H1 (cell line): ENCODE measurements at regions of chr5 and their contacts with region 1.

Region 1: GRCh38 chr5:112366987-112367386 is 52.1 kb downstream of the EPB41L4A start:
- DNase-seq: no peak
- H3K4me3 ChIP-seq: no peak overlapping the region
- H3K27ac ChIP-seq: no peak overlapping the region
- H3K4me1 ChIP-seq: no peaks in the 10 kb centered on the region
- H3K27me3 ChIP-seq: no peaks in the 10 kb centered on the region
- CTCF ChIP-seq: peak; percentile 25 to 76 (median 54)
- EP300 ChIP-seq: no peak
- POLR2A ChIP-seq: no peak
- RAD21 ChIP-seq: peak; percentile 43 to 63; a peak in 3 of 4 replicates

Region 2: GRCh38 chr5:112174959-112175594 is 191.9 kb before region 1 on chr5:
- CTCF ChIA-PET with region 1: interaction called, 17 read pairs
- POLR2A ChIA-PET with region 1: no interaction called
- DNase-seq: no peak
- H3K4me3 ChIP-seq: no peak overlapping the region
- H3K27ac ChIP-seq: no peak overlapping the region
- H3K4me1 ChIP-seq: no peaks in the 10 kb centered on the region
- H3K27me3 ChIP-seq: no peaks in the 10 kb centered on the region
- CTCF ChIP-seq: peak in 2 of 3 experiments; percentile 60 to 63; a peak in 3 of 4 replicates
- EP300 ChIP-seq: no peak
- POLR2A ChIP-seq: no peak
- RAD21 ChIP-seq: peak; percentile 82 to 87

Region 3: DNA sequence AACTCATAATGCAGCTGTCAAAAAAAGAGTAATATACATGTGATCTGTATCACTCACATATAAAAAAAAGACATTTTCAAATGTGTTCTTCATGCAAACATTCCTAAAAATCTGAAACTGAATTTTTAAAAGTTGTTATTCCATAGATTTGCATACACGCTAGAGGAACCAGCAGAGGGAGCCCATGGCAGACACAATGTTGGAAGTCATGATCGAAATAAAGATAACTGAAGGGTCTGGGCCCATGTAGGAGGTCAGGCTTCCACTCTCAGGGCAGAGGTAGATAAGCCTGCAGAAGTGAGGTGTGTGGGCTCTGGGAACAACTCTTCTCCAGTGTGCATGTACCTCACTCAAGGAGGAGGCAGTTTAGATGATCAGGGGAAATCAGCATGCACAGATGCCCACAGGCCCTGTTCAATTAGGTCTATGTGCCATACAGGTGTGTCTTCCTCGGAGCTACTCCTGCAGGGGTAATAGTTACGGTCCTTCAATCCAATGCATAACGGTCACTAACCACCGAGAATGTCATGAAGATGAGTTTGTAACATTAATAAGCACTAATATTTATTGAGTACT is 156.5 kb before region 1 on chr5:
- CTCF ChIA-PET with region 1: interaction called, 11 read pairs
- POLR2A ChIA-PET with region 1: no interaction called
- DNase-seq: no peak
- H3K4me3 ChIP-seq: no peak overlapping the region
- H3K27ac ChIP-seq: no peak overlapping the region
- H3K4me1 ChIP-seq: peaks cover 0 to 5% (median 2%) of the 10 kb centered on the region in 4 experiments; a peak in 3 of 7 replicates
- H3K27me3 ChIP-seq: no peaks in the 10 kb centered on the region
- CTCF ChIP-seq: peak in 2 of 3 experiments; percentile 61 to 63; a peak in 3 of 4 replicates
- EP300 ChIP-seq: no peak
- POLR2A ChIP-seq: no peak
- RAD21 ChIP-seq: peak; percentile 80 to 84

Region 4: DNA sequence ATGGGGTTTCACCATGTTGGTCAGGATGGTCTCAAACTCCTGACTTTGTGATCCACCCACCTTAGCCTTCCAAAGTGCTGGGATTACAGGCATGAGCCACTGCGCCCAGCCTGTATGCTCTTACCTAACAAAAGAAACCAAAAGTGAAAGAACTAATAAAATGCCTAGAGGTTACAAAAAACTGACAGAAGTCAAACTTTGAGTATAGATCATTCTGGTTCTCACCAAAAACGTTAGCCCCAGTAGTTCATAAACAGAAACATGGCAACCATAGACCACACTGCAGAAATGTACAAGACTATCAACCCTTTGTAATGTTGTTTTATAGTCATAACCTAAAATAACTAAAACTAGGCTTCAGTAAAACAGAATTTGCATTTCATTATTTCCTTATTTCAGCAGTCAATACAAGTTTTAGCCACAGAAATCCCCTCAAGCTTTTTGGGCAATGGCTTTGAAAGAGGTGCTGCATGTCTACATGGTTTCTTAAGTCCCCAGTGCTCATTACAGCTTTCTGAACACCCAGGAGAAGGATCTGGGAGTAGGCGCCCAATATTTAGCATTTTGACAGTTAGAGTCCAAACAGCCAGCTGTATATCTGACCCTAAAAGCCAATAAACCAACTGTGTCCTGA is 20.5 kb before region 1 on chr5:
- CTCF ChIA-PET with region 1: interaction called, 25 read pairs
- POLR2A ChIA-PET with region 1: no interaction called
- DNase-seq: no peak
- H3K4me3 ChIP-seq: no peak overlapping the region
- H3K27ac ChIP-seq: no peak overlapping the region
- H3K4me1 ChIP-seq: peaks cover 4 to 17% (median 8%) of the 10 kb centered on the region in 4 experiments; a peak in 6 of 7 replicates
- H3K27me3 ChIP-seq: no peaks in the 10 kb centered on the region
- CTCF ChIP-seq: no peak
- EP300 ChIP-seq: no peak
- POLR2A ChIP-seq: no peak
- RAD21 ChIP-seq: no peak

Region 5: DNA sequence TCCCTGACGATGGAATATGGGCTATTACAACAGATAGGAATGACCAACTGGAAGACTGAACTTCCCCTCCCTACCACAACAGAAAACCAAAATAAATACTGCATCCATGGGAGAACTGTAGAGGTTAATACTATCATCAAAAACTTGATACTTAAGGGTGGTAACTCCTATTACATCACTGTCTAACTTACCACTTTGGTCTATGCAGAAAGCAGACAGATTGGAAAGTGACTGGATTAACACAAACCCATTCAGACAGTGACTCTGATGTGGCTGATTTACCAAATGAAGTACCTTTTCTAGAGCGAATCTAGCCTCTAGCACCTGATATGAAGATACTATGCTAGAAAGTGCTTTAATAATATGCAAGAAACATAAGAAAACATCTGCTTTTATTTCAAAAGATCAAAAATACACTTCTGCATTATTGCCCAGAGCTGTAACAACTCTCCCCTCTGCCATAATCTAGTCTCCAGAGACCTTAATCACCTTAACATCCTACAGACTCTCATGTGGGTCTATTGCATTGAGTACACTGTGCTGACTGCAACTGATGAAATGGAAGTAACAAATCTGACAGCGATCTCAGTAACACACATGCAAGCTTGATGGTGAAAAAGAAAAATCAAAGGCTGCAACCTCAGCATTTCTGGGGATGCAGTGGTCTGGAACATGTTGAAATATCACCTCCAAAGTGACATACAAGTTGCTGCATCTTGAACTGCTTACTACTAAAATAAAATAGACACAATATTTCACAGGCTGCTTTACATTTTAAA is 10.6 kb before region 1 on chr5:
- CTCF ChIA-PET with region 1: interaction called, 25 read pairs
- POLR2A ChIA-PET with region 1: no interaction called
- DNase-seq: no peak
- H3K4me3 ChIP-seq: no peak overlapping the region
- H3K27ac ChIP-seq: no peak overlapping the region
- H3K4me1 ChIP-seq: peaks cover 0 to 10% (median under 1%) of the 10 kb centered on the region in 4 experiments; a peak in 2 of 7 replicates
- H3K27me3 ChIP-seq: no peaks in the 10 kb centered on the region
- CTCF ChIP-seq: no peak
- EP300 ChIP-seq: no peak
- POLR2A ChIP-seq: no peak
- RAD21 ChIP-seq: no peak

Region 6: GRCh38 chr5:112388739-112389138 is 21.8 kb after region 1 on chr5:
- CTCF ChIA-PET with region 1: interaction called, 17 read pairs
- POLR2A ChIA-PET with region 1: no interaction called
- DNase-seq: no peak
- H3K4me3 ChIP-seq: no peak overlapping the region
- H3K27ac ChIP-seq: no peak overlapping the region
- H3K4me1 ChIP-seq: peaks cover 0 to 8% (median 2%) of the 10 kb centered on the region in 4 experiments; a peak in 2 of 7 replicates
- H3K27me3 ChIP-seq: no peaks in the 10 kb centered on the region
- CTCF ChIP-seq: no peak
- EP300 ChIP-seq: no peak
- POLR2A ChIP-seq: no peak
- RAD21 ChIP-seq: no peak